Dorsolateral prefrontal cortex (tissue), 120 donors: ENCODE measurements at regions of chr4 and their contacts with region 1.

Region 1: DNA sequence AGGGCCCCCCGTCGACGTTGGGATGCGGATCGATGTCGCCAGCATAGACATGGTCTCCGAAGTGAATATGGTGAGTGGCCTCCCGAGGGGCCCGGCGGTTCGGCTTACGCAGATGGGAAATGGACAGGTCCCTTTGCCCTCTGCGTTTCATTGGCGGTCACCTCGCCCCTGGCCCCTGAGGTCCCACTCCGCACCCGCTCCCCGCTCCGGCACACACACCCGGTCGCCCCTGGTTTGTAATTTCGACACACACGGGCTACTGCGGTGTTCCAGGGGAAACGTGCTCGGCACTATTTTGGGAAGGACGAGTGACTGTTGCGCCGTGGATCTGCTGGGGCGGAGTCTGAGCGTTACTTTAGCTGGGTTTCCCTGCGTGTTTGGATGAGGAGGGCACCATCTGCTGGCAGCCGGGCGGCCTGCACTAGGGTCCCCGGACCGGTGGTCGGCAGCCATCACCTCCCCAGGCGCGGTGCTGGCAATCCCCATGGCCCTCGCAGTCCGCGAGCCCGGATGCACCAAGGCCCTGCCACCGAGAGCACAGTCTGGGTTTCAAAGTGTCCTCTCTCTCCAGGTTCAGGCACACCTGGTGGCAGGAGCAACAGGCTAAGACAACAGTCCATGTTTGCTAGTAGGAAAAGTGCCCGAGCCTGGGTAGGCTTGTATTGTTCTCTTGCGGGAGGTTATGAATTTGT is 1.2 kb downstream of the GABRB1 start:
- DNase-seq: peak; percentile 59 to 83 (median 78)
- H3K4me3 ChIP-seq: peak overlapping the region; percentile 52 to 85 (median 71)
- H3K27ac ChIP-seq: peak overlapping the region in 58 of 59 donors; percentile 52 to 95 (median 86)
- H3K27me3 ChIP-seq: no peaks in the 10 kb centered on the region
- CTCF ChIP-seq: peak; percentile 58 to 90 (median 80)

Region 2: DNA sequence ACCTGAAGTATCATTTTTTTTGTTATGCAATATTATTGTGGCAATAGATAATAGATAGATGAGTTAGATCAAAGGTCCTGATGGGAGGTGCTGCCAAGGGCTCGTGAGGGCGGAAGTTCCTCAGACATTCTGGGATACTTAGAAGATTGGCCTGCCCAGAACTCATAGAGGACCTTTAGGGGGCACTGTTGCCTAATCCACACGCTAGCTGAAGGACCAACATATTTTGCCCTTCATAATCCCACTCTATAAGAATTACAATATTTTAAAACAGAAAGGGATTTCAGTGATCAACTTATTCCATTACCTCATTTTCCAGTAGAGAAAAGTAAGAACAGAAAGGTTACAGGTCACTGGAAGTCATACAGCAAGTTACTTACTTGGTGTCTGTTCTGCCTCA is 100.6 kb before region 1 on chr4:
- intact Hi-C with region 1: loop called (anchors 5 to 10 kb)
- DNase-seq: peak in 6 of 10 donors; percentile 7 to 49 (median 44)
- H3K4me3 ChIP-seq: no peak overlapping the region
- H3K27ac ChIP-seq: no peak overlapping the region
- H3K27me3 ChIP-seq: no peaks in the 10 kb centered on the region
- CTCF ChIP-seq: peak; percentile 17 to 83 (median 72)

Region 3: DNA sequence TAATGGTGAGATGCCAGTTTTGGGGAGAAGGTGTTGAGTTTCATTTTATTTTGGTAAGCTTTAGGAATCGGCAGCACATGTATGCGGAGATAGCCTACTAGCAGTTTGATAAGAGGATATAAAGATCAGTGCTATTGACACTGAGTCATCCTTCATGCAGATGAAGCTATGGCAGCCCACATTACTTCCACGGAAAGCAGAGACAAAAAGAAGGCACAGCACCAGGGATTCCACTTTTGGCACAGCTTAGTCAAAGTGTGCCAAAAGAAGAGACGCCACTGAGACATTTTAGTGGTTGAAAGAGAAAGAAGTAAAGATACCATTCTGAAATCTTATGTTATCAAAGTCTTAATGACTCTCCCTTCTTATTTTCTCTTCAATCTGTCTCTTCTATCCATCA is 102.6 kb after region 1 on chr4:
- intact Hi-C with region 1: loop called in 1 of 2 experiments (anchors 10 kb)
- DNase-seq: peak in 1 of 10 donors; percentile 28
- H3K4me3 ChIP-seq: peak overlapping the region in 1 of 59 donors; percentile 9
- H3K27ac ChIP-seq: peak overlapping the region in 8 of 59 donors; percentile 11 to 68 (median 19)
- H3K27me3 ChIP-seq: no peaks in the 10 kb centered on the region
- CTCF ChIP-seq: no peak